GM13976 (cell line): ENCODE measurements at regions of chr13 and their contacts with region 1.

Region 1: GRCh38 chr13:30142486-30143211 is 164.7 kb downstream of the KATNAL1 start:
- DNase-seq: no peak
- CTCF ChIP-seq: no peak

Region 2: GRCh38 chr13:29817604-29818378 is 324.9 kb before region 1 on chr13:
- in situ Hi-C with region 1: no loop called
- DNase-seq: peak; percentile 43
- CTCF ChIP-seq: no peak

Region 3: DNA sequence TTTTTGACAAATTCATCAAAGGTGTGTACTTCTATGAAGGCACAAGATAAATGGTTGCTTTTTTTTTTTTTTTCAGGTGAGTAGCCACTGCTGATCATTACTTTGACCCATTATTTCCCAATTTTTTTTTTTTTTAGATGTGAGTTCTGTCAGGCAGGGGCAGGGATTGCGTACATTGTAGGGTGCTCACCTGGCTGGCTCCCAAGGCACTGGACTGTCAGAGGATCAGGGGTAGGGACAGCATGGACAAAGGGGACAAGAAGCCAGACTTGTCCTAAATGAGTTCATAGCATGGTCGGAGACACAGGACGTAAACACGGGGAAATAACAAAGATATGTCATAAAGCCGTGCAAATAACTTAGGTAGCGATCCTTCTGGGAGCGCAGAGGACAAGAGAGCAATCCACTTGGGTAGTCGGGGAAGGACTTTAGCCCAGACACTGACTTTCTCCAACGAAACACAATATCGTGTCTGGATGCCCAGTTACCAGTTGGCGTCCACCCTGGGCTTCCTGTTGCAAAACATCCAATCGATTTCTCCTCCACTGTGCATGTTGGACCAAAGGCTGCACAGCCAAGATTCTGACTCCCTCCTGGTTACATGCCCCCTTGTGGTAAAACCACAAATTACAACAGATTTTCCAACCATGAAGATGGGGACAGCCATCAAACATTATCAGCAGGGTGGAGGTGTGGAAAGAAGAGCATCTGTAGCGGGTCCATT is 192.2 kb after region 1 on chr13:
- in situ Hi-C with region 1: loop called (anchors 10 kb)
- DNase-seq: peak; percentile 42
- CTCF ChIP-seq: no peak

Region 4: GRCh38 chr13:30581582-30581981 is 438.9 kb after region 1 on chr13:
- in situ Hi-C with region 1: loop called (anchors 10 kb)
- DNase-seq: peak; percentile 47
- CTCF ChIP-seq: peak; percentile 44